Body of pancreas (tissue), 4 donors: ENCODE measurements at regions of chr20 and their contacts with region 1.

Region 1: DNA sequence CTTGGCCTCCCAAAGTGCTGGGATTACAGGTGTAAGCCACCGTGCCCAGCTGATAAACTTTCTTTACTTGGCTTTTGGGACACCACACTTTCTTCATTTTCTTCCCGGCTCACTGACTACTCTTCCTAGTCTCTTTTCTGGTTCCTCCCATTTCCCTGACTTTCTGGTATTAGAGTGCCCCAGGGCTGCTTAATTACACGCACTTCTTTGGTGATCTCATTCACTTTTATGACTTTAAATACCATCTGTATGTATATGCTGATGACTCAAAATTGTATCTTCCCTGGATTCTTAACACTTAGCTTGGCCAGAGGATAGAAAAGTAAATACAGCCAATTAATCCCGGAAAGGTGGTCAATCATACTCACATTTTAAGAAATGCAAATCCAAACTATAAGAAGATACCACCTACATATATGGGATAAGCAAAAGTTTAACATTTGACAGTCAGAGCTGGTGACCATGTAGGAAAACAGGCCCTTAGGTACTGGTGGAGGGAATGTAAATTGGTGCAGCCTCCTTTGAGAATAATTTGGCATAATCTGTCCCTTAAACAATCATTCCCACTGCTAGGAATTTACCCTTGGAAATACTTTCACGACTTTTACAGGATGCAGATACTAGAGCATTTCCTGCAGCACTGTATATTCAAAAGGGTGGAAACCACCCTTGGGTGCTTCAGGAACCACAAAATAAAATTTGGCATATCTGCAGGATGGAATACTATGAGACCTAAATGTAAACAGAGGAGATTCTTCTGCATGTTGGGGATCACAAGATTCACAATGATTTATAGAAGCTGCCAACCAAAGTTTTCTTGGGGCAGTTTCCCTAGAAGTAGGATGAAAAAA is 9.4 kb upstream of the NANP start:
- DNase-seq: no peak
- ATAC-seq: no peak
- H3K4me3 ChIP-seq: no peak overlapping the region
- H3K27ac ChIP-seq: no peak overlapping the region
- H3K4me1 ChIP-seq: no peaks in the 10 kb centered on the region
- H3K27me3 ChIP-seq: no peaks in the 10 kb centered on the region
- CTCF ChIP-seq: no peak
- POLR2A ChIP-seq: no peak

Region 2: DNA sequence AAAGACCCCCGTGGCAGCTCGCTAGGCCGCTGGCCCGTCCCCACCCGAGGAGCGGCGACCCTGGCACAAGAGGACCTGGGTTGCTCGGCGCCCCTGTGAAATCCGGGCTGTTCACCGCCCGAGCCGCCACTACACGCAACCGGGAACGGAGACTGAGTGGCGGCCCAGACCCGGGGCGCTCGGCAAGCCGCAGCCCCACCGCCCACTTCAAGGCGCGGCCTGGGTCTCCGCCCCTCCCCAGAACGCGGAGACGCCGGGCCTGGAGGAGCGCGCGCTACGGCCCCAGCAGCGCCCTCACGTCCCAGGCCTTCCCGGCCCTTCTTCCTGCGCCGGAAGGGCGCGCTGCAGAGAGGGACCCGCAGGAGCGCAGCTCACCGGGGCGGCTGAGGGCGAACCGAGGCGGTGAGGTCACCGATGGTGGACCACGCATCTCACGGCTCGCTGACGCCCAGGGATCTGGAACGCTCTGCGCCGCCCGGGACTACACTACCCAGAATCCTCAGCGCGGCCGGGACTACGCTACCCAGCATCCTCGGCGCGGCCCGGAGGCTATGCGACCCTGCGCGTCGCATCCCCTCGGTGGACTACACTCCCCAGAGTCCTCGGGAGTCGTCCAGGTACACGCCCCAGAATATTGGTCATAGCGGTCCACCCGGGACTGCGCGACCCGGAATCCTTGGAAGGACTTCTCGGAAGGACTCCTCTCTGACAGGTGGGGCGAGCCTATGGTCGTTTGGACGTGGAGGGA is 63.4 kb after region 1 on chr20 and contains the start of gene ZNF337:
- intact Hi-C with region 1: loop called (anchors 10 kb)
- DNase-seq: peak; percentile 95 to 97 (median 96)
- ATAC-seq: peak; percentile 99
- H3K4me3 ChIP-seq: peak within 1 kb of the TSS; percentile 69 to 97
- H3K27ac ChIP-seq: peak within 1 kb of the TSS; percentile 81 to 90 (median 88)
- H3K4me1 ChIP-seq: peaks cover 14% of the 10 kb centered on the region
- H3K27me3 ChIP-seq: no peaks in the 10 kb centered on the region
- CTCF ChIP-seq: peak in 3 of 7 experiments; percentile 11 to 24 (median 23)
- POLR2A ChIP-seq: peak; percentile 84 to 87 (median 85)
- total RNA-seq, gene ZNF337: 10.2 to 13.7 TPM